ENCODE measurements at regions of chr2 and their contacts with region 1.

Region 1: DNA sequence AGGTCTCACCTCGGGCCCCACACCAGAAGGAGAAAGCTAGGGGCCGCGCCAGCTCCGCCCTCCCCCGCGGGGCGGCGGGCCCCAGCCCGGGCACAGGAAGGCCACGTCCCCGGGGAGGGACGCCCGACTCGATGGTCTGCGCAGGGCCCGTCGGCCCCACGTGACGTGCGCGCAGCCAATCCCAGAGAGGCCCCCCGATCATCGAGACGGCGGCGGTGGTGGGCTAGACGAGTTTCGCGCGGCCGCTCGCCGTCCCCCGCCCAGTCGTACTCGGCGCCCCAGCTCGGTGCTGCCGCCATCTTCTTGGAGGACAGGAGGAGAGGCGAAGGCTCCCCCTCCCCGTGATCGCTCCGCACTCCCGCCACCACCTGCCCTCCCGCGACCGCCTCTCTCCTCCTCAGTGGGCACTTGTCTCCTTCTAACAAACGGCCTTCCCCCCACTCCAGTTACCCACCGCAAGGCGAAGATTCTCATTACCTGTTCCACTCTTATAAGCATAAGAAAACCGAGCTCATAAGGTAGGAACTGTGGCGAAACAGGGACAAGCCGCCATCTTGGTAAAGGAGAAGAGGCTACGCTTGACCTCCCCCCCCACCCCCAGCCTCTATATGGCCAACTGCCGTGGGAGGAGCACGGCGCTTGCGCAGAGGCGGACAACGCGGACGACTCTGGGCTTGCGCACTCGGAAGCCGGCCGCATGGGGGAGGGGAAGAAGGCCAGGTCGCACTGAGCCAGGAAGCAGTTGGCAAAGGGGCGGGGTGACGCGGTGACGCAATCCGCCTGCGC is at the start of gene HDLBP:
- DNase-seq: peak; percentile 100
- H3K4me3 Mint-ChIP-seq: peak within 1 kb of the TSS; percentile 100
- H3K27ac Mint-ChIP-seq: peak within 1 kb of the TSS; percentile 100
- H3K4me1 Mint-ChIP-seq: peaks cover 69% of the 10 kb centered on the region
- H3K27me3 Mint-ChIP-seq: no peaks in the 10 kb centered on the region
- total RNA-seq, gene HDLBP: 190 to 193 TPM

Region 2: GRCh38 chr2:240983361-240983995 is 331.8 kb before region 1 on chr2:
- CTCF ChIA-PET with region 1: no interaction called
- POLR2A ChIA-PET with region 1: no interaction called
- DNase-seq: peak; percentile 42
- H3K4me3 Mint-ChIP-seq: no peak overlapping the region
- H3K27ac Mint-ChIP-seq: no peak overlapping the region
- H3K4me1 Mint-ChIP-seq: no peaks in the 10 kb centered on the region
- H3K27me3 Mint-ChIP-seq: peaks cover 18% of the 10 kb centered on the region

Region 3: DNA sequence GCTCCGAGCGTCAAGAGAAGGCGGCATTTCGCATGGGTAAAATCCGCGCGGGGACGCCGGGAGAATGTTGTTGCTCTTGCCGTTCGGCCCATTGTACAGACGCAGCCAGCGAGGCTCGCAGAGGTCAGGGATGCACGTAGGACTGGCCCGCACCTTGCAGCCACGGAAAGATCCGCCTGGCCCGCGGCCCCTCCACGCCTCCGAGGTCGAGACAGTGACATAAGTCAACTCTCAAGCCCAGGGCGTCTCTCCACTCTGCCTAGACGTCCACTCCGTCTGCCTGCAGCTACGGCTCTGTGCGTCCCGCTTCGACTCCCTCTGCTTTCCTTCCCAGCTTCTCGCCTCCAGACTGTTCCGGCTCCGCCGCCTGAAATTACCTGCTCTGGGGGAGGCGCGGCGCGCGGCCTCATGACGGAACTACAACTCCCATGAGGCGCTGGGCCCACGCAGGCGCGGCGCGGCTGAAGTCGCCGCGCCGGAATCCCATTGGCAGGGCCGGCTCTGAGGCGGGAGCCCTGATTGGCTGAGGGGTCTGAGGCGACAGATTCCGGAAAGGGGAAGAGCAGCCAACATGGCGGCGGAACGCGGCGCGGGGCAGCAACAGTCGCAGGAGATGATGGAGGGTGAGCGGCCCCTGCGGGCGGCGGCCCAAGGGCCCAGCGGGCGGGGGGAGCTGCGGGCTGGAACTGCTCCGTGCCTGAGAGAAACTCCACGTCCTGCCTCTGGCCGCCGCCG is 165.2 kb before region 1 on chr2 and contains the start of gene PPP1R7:
- CTCF ChIA-PET with region 1: no interaction called
- POLR2A ChIA-PET with region 1: interaction called, 14 read pairs
- DNase-seq: peak; percentile 97
- H3K4me3 Mint-ChIP-seq: peak within 1 kb of the TSS; percentile 92
- H3K27ac Mint-ChIP-seq: peak within 1 kb of the TSS; percentile 84
- H3K4me1 Mint-ChIP-seq: peaks cover 47% of the 10 kb centered on the region
- H3K27me3 Mint-ChIP-seq: no peaks in the 10 kb centered on the region
- total RNA-seq, gene PPP1R7: 103 to 106 TPM

Region 4: GRCh38 chr2:241300000-241300399 is 15.3 kb before region 1 on chr2:
- CTCF ChIA-PET with region 1: no interaction called
- POLR2A ChIA-PET with region 1: interaction called, 52 read pairs
- DNase-seq: no peak
- H3K4me3 Mint-ChIP-seq: no peak overlapping the region
- H3K27ac Mint-ChIP-seq: peak overlapping the region; percentile 5
- H3K4me1 Mint-ChIP-seq: peaks cover 39% of the 10 kb centered on the region
- H3K27me3 Mint-ChIP-seq: no peaks in the 10 kb centered on the region

Region 5: GRCh38 chr2:241358470-241358869 is 43.2 kb after region 1 on chr2:
- CTCF ChIA-PET with region 1: no interaction called
- POLR2A ChIA-PET with region 1: interaction called, 13 read pairs
- DNase-seq: no peak
- H3K4me3 Mint-ChIP-seq: no peak overlapping the region
- H3K27ac Mint-ChIP-seq: no peak overlapping the region
- H3K4me1 Mint-ChIP-seq: peaks cover 21% of the 10 kb centered on the region
- H3K27me3 Mint-ChIP-seq: no peaks in the 10 kb centered on the region